ENCODE measurements at regions of chr19 and their contacts with region 1.

Region 1: GRCh38 chr19:1605236-1606137 is at the start of gene UQCR11:
- DNase-seq: peak; percentile 96
- H3K4me3 Mint-ChIP-seq: peak within 1 kb of the TSS; percentile 79
- H3K27ac Mint-ChIP-seq: peak within 1 kb of the TSS; percentile 57
- H3K4me1 Mint-ChIP-seq: peaks cover 4% of the 10 kb centered on the region
- H3K27me3 Mint-ChIP-seq: no peaks in the 10 kb centered on the region
- CTCF ChIP-seq: peak; percentile 50
- total RNA-seq, gene UQCR11: 211 and 256 TPM in 2 replicates

Region 2: DNA sequence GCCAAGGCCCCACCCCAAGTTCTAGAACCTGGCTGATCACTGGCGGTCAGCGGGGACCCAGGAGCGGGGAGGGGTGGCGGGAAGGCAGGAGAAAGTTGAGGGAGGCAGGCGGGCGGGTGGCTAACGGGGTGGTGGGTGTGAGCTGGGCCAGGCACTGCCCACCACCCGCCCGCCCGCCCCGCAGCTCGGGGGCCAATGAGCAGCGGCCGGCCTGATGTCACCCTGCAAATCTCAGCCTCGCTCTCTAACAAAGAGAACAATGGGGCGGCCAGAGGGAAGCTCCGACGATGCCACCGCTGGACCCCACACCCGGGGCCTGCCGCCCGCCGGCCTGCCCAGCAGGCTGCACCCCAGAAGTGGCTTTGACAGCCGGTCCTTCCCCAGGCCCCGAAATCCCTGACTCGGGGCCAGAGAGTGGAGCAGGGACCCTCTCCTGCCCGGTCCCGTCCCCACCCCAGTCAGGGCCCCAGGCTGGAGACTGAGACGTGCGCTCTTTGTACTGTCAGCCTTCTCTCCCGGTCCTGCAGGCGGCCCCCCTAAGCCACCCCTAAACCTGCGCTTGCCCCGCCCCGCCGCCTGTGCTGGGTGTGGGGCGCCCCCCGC is 38.9 kb before region 1 on chr19:
- CTCF ChIA-PET with region 1: interaction called, 3 read pairs
- POLR2A ChIA-PET with region 1: interaction called, 17 read pairs
- intact Hi-C with region 1: no loop called
- DNase-seq: peak; percentile 78
- H3K4me3 Mint-ChIP-seq: peak overlapping the region; percentile 65
- H3K27ac Mint-ChIP-seq: no peak overlapping the region
- H3K4me1 Mint-ChIP-seq: no peaks in the 10 kb centered on the region
- H3K27me3 Mint-ChIP-seq: peaks cover 17% of the 10 kb centered on the region
- CTCF ChIP-seq: no peak

Region 3: DNA sequence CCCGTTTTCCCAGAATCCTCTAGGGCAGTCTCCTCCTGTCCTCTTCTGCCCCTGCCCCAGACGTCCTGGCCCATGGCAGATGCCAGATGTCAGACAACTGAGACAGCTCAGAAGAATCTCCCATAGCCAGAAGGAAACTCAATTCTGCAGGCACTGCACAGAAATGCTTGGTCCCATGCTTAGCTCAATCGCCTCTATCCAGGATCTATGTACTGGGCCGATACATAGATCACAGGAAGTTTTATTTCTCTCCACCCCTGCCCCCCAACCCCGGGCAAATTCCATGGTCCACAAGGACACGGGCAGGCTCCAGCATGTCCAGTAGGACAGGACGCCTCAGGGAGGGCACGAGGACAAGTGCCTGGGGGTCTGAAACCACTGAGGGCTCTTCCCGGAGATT is 17.6 kb before region 1 on chr19:
- CTCF ChIA-PET with region 1: interaction called, 4 read pairs
- POLR2A ChIA-PET with region 1: interaction called, 105 read pairs
- intact Hi-C with region 1: no loop called
- DNase-seq: peak; percentile 20
- H3K4me3 Mint-ChIP-seq: no peak overlapping the region
- H3K27ac Mint-ChIP-seq: peak overlapping the region; percentile 40
- H3K4me1 Mint-ChIP-seq: peaks cover 19% of the 10 kb centered on the region
- H3K27me3 Mint-ChIP-seq: no peaks in the 10 kb centered on the region
- CTCF ChIP-seq: no peak

Region 4: GRCh38 chr19:1592755-1593500 is 12.6 kb before region 1 on chr19 and contains the start of gene MBD3:
- CTCF ChIA-PET with region 1: interaction called, 4 read pairs
- POLR2A ChIA-PET with region 1: interaction called, 105 read pairs
- intact Hi-C with region 1: no loop called
- DNase-seq: peak; percentile 94
- H3K4me3 Mint-ChIP-seq: peak within 1 kb of the TSS; percentile 83
- H3K27ac Mint-ChIP-seq: peak within 1 kb of the TSS; percentile 94
- H3K4me1 Mint-ChIP-seq: peaks cover 14% of the 10 kb centered on the region
- H3K27me3 Mint-ChIP-seq: no peaks in the 10 kb centered on the region
- CTCF ChIP-seq: no peak
- total RNA-seq, gene MBD3: 103 and 114 TPM in 2 replicates

Region 5: GRCh38 chr19:1652471-1653299 is 47.2 kb after region 1 on chr19 and contains the start of gene TCF3:
- CTCF ChIA-PET with region 1: interaction called, 4 read pairs
- POLR2A ChIA-PET with region 1: interaction called, 49 read pairs
- intact Hi-C with region 1: loop called (anchors 5 kb)
- DNase-seq: peak; percentile 99
- H3K4me3 Mint-ChIP-seq: peak within 1 kb of the TSS; percentile 75
- H3K27ac Mint-ChIP-seq: peak within 1 kb of the TSS; percentile 89
- H3K4me1 Mint-ChIP-seq: no peaks in the 10 kb centered on the region
- H3K27me3 Mint-ChIP-seq: no peaks in the 10 kb centered on the region
- CTCF ChIP-seq: no peak
- total RNA-seq, gene TCF3: 79.7 and 100 TPM in 2 replicates

Region 6: GRCh38 chr19:1747285-1748114 is 142.0 kb after region 1 on chr19:
- CTCF ChIA-PET with region 1: no interaction called
- POLR2A ChIA-PET with region 1: interaction called, 15 read pairs
- intact Hi-C with region 1: no loop called
- DNase-seq: peak; percentile 100
- H3K4me3 Mint-ChIP-seq: peak overlapping the region; percentile 81
- H3K27ac Mint-ChIP-seq: peak overlapping the region; percentile 90
- H3K4me1 Mint-ChIP-seq: no peaks in the 10 kb centered on the region
- H3K27me3 Mint-ChIP-seq: peaks cover 10% of the 10 kb centered on the region
- CTCF ChIP-seq: no peak

Region 7: DNA sequence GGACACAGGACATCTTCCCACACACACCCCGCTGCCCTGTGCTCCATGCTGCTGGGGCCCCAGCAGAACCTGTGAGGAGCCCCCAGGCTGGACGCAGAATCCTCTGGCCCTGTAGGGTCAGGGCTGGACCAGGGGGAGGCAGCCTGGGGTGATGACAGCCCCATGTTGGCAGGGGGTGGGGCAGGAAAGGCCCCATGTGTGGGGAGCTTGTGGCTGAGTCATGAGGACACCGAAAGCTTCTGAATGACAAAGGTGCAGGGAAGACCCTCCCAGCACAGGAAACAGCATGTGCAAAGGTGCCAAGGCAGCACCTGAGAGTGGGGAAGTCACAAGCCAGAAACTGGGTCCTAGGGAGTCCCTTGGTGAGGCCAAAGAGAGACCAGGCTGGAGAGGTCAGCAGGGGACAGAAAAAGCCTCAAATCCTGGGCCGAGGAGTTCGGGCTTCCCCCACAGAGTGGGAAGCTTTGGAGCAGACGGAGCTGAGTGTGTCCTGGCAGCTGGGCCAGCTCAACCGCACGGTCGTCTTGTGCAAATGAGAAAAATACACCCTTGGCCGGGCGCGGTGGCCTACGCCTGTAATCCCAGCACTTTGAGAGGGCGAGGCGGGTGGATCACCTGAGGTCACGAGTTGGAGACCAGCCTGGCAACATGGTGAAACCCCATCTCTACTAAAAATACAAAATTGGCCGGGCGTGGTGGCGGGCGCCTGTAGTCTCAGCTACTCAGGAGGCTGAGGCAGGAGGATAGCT is 189.1 kb after region 1 on chr19:
- CTCF ChIA-PET with region 1: interaction called, 4 read pairs
- POLR2A ChIA-PET with region 1: no interaction called
- intact Hi-C with region 1: loop called (anchors 5 kb)
- DNase-seq: no peak
- H3K4me3 Mint-ChIP-seq: no peak overlapping the region
- H3K27ac Mint-ChIP-seq: no peak overlapping the region
- H3K4me1 Mint-ChIP-seq: peaks cover 14% of the 10 kb centered on the region
- H3K27me3 Mint-ChIP-seq: no peaks in the 10 kb centered on the region
- CTCF ChIP-seq: no peak